Activated B cell treated with CpG ODN at 0.5 μM for 24 hours (primary cell): ENCODE measurements at regions of chr2 and their contacts with region 1.

Region 1: GRCh38 chr2:134118279-134119116 is 135.4 kb upstream of the MGAT5 start:
- DNase-seq: peak; percentile 50
- ATAC-seq: peak; percentile 49
- H3K4me3 Mint-ChIP-seq: peak overlapping the region; percentile 99
- H3K27ac Mint-ChIP-seq: peak overlapping the region; percentile 46
- H3K4me1 Mint-ChIP-seq: peaks cover 38% of the 10 kb centered on the region
- H3K27me3 Mint-ChIP-seq: no peaks in the 10 kb centered on the region
- CTCF ChIP-seq: no peak

Region 2: GRCh38 chr2:133953524-133953923 is 165.0 kb before region 1 on chr2:
- CTCF ChIA-PET with region 1: interaction called, 7 read pairs
- POLR2A ChIA-PET with region 1: interaction called, 3 read pairs
- intact Hi-C with region 1: loop called (anchors 2 kb)
- DNase-seq: peak; percentile 44
- ATAC-seq: peak; percentile 84
- H3K4me3 Mint-ChIP-seq: peak overlapping the region; percentile 46
- H3K27ac Mint-ChIP-seq: peak overlapping the region; percentile 78
- H3K4me1 Mint-ChIP-seq: peaks cover 83% of the 10 kb centered on the region
- H3K27me3 Mint-ChIP-seq: no peaks in the 10 kb centered on the region
- CTCF ChIP-seq: no peak

Region 3: GRCh38 chr2:134154246-134154645 is 35.7 kb after region 1 on chr2:
- CTCF ChIA-PET with region 1: interaction called, 11 read pairs
- POLR2A ChIA-PET with region 1: interaction called, 10 read pairs
- intact Hi-C with region 1: no loop called
- DNase-seq: peak; percentile 36
- ATAC-seq: peak; percentile 56
- H3K4me3 Mint-ChIP-seq: peak overlapping the region; percentile 48
- H3K27ac Mint-ChIP-seq: peak overlapping the region; percentile 79
- H3K4me1 Mint-ChIP-seq: peaks cover 84% of the 10 kb centered on the region
- H3K27me3 Mint-ChIP-seq: no peaks in the 10 kb centered on the region
- CTCF ChIP-seq: no peak

Region 4: DNA sequence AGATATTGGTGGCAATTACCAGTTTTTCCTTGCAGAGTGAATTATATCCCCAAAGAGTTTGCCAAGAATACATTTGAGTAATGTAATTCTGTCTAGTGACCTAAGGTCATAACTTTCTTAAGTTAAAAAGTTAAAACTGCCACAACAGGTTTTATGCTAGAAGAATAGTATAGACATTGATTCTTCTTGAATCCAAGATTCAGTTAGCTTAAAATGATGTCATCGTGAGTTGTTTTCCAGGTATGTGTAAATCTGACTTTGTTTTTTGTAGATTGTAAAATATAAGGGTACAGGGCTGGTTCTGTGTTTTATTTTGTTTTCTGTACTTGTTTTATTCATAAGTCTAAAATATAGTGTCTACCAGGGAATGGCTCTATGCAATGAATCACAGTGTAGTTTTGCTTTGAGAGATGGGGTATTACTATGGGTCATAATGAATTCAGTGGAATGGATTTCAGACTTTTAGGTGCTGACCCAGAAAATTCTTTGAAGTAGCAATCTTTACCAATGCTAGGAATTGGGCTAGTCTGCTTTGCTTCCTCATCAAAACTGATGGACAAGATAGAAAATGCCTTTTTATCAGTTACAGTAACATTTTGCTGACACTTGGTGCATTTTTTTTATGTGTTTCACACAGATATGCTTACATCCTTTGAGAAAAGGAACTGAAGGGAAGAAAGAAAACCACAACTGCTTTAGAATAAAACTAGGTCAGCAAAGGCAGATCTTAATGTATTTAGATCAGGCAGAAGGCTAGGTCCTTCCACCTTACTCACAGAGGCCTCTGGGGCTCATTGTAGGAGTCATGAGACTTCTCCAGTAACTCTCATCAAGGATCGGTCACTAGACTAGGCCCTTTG is 114.6 kb after region 1 on chr2:
- CTCF ChIA-PET with region 1: interaction called, 15 read pairs
- POLR2A ChIA-PET with region 1: interaction called, 16 read pairs
- intact Hi-C with region 1: no loop called
- DNase-seq: no peak
- ATAC-seq: peak; percentile 35
- H3K4me3 Mint-ChIP-seq: peak overlapping the region; percentile 52
- H3K27ac Mint-ChIP-seq: peak overlapping the region; percentile 86
- H3K4me1 Mint-ChIP-seq: peaks cover 90% of the 10 kb centered on the region
- H3K27me3 Mint-ChIP-seq: no peaks in the 10 kb centered on the region
- CTCF ChIP-seq: no peak

Region 5: DNA sequence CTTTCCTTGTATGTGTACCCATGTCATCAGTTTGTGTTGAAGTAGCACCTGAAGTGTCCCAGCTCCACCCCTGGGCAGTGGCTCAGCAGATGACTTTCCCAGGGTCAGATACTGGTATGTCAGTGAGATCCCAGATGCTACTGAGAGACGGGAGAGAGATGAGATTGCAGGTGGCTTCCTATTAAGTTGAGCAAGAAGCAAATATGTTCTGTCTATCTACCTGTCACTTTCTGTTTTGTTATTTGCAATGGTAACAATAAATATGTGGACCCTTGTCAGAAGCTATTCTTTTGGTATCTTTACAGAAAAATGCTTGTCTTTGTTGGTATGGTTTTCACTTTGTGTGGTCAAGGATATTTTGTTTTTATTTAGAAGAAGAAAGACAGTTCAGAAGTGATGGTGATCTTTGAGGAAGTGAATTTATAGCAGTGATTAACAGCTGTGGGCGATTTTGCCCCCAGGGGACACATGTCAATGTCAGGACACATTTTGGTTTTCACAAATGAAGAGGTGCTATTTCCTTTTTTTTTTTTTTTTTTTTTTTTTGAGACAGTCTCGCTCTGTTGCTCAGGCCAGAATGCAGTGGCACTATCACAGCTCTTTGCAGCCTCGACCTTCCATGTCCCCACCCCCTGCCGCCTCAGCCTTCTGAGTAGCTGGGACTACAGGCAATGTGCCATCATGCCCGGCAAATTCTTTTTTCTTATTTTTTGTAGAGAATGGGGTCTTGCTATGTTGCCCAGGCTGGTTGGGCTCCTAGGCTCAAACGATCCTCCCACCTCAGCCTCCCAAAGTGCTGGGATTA is 156.8 kb after region 1 on chr2:
- CTCF ChIA-PET with region 1: interaction called, 5 read pairs
- POLR2A ChIA-PET with region 1: interaction called, 12 read pairs
- intact Hi-C with region 1: loop called (anchors 1 kb)
- DNase-seq: peak; percentile 54
- ATAC-seq: peak; percentile 85
- H3K4me3 Mint-ChIP-seq: peak overlapping the region; percentile 77
- H3K27ac Mint-ChIP-seq: peak overlapping the region; percentile 94
- H3K4me1 Mint-ChIP-seq: peaks cover 98% of the 10 kb centered on the region
- H3K27me3 Mint-ChIP-seq: no peaks in the 10 kb centered on the region
- CTCF ChIP-seq: no peak

Region 6: GRCh38 chr2:134453476-134453875 is 335.0 kb after region 1 on chr2:
- CTCF ChIA-PET with region 1: interaction called, 8 read pairs
- POLR2A ChIA-PET with region 1: no interaction called
- intact Hi-C with region 1: loop called (anchors 1 kb)
- DNase-seq: no peak
- ATAC-seq: no peak
- H3K4me3 Mint-ChIP-seq: no peak overlapping the region
- H3K27ac Mint-ChIP-seq: no peak overlapping the region
- H3K4me1 Mint-ChIP-seq: no peaks in the 10 kb centered on the region
- H3K27me3 Mint-ChIP-seq: no peaks in the 10 kb centered on the region
- CTCF ChIP-seq: no peak